Activated CD4-positive, alpha-beta memory T cell treated with anti-CD3 and anti-CD28 coated beads for 36 hours (primary cell): ENCODE measurements at regions of chr20 and their contacts with region 1.

Region 1: DNA sequence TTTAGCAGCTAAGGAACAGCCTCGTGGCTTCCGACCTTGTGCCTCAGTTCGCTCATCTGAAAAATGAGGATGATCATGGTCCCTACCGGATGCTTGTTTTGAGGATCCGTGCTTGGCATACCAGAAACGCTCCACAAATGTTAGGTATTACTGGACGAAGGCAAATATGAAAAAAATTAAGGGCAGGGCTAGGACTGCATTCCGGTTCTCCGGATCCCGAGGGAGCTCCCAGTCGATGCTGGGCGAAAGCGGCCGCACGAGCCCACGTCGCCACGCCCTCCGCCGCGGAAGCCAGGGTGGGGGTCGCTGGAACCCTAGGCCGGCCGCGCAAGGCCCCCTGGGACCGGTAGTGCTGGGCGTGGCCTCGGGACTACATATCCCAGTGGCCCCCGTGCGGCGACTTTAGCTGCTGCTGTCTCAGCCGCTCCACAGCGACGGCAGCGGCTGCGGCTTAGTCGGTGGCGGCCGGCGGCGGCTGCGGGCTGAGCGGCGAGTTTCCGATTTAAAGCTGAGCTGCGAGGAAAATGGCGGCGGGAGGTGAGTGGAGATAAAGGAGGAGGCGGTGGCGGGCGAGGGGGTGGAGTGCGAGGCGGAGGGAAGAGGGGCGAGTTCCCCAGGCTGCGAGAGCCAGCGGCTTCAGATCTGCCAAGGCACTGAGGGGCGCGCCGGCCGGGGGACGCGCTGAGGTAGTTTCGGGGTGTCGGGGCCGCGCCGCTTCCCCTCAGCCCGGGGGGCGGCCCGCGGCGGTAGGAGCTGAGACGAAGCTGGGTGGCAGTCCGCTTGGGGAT is at the start of gene NCOA3:
- DNase-seq: peak; percentile 96
- H3K4me3 Mint-ChIP-seq: peak within 1 kb of the TSS; percentile 92
- H3K27ac Mint-ChIP-seq: peak within 1 kb of the TSS; percentile 89
- H3K4me1 Mint-ChIP-seq: peaks cover 54% of the 10 kb centered on the region
- H3K27me3 Mint-ChIP-seq: no peaks in the 10 kb centered on the region
- total RNA-seq, gene NCOA3: 72.0 to 81.8 TPM

Region 2: GRCh38 chr20:47453142-47453782 is 48.4 kb before region 1 on chr20:
- CTCF ChIA-PET with region 1: interaction called, 5 read pairs
- POLR2A ChIA-PET with region 1: interaction called, 6 read pairs
- intact Hi-C with region 1: loop called (anchors 1 kb)
- DNase-seq: peak; percentile 77
- H3K4me3 Mint-ChIP-seq: no peak overlapping the region
- H3K27ac Mint-ChIP-seq: peak overlapping the region; percentile 74
- H3K4me1 Mint-ChIP-seq: peaks cover 35% of the 10 kb centered on the region
- H3K27me3 Mint-ChIP-seq: no peaks in the 10 kb centered on the region

Region 3: DNA sequence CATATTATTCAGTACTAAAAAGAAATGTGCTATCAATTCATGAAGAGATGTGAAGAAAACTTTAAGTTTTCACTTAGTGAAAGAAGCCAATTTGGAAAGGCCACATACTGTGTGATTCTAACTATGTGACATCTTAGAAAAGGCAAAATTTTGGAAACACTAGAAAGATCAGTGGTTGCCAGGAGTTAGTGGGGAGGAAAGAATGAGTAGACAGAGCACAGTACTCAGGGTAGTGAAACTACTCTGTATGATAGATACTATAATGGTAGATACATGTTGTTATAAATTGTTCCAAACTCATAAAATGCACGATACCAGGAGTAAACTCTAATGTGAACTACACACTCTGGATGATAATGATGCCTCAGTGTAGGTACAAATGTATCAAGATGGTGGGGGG is 14.2 kb after region 1 on chr20:
- CTCF ChIA-PET with region 1: interaction called, 3 read pairs
- POLR2A ChIA-PET with region 1: no interaction called
- intact Hi-C with region 1: loop called (anchors 2 kb)
- DNase-seq: no peak
- H3K4me3 Mint-ChIP-seq: no peak overlapping the region
- H3K27ac Mint-ChIP-seq: peak overlapping the region; percentile 86
- H3K4me1 Mint-ChIP-seq: peaks cover 57% of the 10 kb centered on the region
- H3K27me3 Mint-ChIP-seq: no peaks in the 10 kb centered on the region

Region 4: DNA sequence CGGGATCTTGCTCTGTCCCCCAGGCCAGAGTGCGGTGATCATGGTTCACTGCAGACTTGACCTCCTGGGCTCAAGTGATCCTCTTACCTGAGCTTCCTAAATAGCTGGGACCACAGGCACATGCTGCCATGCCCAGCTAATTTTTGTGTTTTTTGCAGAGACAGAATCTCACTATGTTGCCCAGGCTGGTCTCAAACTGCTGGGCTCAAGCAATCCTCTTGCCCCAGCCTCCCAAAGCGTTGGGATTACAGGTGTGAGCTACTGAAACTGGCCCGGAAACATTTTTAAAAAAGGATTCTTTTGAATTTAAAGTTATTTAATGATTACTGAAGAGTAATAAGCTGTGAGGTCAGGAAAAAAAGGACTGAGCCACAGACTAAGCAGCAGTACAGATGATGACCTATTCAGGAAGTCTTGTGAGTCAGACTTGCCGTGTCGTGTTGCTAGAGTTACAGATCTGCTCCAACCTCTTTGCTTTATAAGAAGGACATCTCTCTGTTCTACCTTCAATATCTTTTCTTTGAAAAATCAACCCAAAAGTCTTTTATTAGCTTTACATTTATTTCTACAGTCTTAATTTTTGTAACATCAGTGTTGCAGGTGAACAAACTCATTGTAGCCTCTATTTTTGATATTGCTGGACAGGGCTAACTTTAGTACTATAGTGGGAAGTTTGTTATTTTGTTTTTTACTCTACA is 108.7 kb after region 1 on chr20:
- CTCF ChIA-PET with region 1: interaction called, 13 read pairs
- POLR2A ChIA-PET with region 1: interaction called, 8 read pairs
- intact Hi-C with region 1: loop called (anchors 1 kb)
- DNase-seq: peak; percentile 91
- H3K4me3 Mint-ChIP-seq: peak overlapping the region; percentile 67
- H3K27ac Mint-ChIP-seq: peak overlapping the region; percentile 90
- H3K4me1 Mint-ChIP-seq: peaks cover 86% of the 10 kb centered on the region
- H3K27me3 Mint-ChIP-seq: no peaks in the 10 kb centered on the region

Region 5: GRCh38 chr20:47620808-47621805 is 119.4 kb after region 1 on chr20:
- CTCF ChIA-PET with region 1: interaction called, 25 read pairs
- POLR2A ChIA-PET with region 1: interaction called, 3 read pairs
- intact Hi-C with region 1: no loop called
- DNase-seq: no peak
- H3K4me3 Mint-ChIP-seq: no peak overlapping the region
- H3K27ac Mint-ChIP-seq: peak overlapping the region; percentile 11
- H3K4me1 Mint-ChIP-seq: peaks cover 33% of the 10 kb centered on the region
- H3K27me3 Mint-ChIP-seq: no peaks in the 10 kb centered on the region

Region 6: DNA sequence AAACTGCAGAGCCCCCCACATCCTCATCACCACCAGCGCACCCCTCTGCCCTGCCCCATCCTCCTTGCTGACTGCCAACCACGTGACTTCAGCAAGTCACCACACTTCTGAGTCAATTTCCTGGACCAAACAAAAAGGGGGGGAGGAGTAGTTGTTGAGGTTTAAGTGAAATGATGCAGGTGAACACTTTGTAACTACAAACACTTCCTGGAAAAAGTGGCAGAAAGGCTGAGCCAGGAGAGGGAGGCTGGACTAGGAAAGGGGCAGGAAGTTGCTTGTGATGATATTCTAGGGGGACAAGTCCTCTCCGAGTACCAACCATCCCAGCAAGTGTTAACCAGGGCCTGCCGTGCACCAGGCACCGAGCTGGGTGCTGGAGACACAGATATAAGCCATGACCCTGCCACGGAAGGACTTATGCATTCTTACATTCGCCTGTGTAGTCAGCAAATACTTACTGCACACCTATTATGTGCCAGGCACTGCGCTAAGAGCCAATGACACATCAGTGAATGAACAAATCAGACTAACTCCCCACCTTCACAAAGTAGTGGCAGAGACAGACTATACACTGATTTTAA is 1258.8 kb after region 1 on chr20:
- CTCF ChIA-PET with region 1: no interaction called
- POLR2A ChIA-PET with region 1: no interaction called
- intact Hi-C with region 1: loop called (anchors 10 kb)
- DNase-seq: peak; percentile 84
- H3K4me3 Mint-ChIP-seq: peak overlapping the region; percentile 52
- H3K27ac Mint-ChIP-seq: peak overlapping the region; percentile 97
- H3K4me1 Mint-ChIP-seq: peaks cover 86% of the 10 kb centered on the region
- H3K27me3 Mint-ChIP-seq: no peaks in the 10 kb centered on the region